ENCODE measurements at regions of chr1 and their contacts with region 1.

Region 1: GRCh38 chr1:179002552-179003345 is 22.9 kb upstream of the FAM20B start:
- DNase-seq: no peak
- H3K4me3 ChIP-seq: no peak overlapping the region
- H3K27me3 ChIP-seq: no peaks in the 10 kb centered on the region
- CTCF ChIP-seq: peak; percentile 92

Region 2: DNA sequence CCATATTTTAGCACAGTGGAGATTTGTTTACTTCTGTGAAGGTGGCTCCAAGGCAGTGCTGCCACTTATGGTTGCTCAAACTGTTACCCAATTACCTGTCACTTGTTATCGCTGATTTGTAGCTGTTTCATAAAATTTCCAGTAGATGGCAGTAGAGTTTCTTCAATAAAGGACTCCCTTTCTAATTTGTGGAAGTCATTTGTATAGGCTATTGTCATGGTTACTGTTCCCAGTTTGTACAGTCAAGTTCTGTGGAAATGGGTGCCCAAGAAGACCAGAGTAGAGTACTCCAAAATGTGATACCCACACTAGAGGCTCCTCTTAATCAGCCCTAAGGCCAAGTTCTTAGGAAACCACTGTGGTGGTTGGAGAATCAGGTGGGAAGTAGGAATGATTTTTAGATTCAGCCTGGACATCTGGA is 692.1 kb before region 1 on chr1:
- CTCF ChIA-PET with region 1: interaction called, 20 read pairs
- POLR2A ChIA-PET with region 1: no interaction called
- DNase-seq: peak; percentile 46
- H3K4me3 ChIP-seq: no peak overlapping the region
- H3K27me3 ChIP-seq: no peaks in the 10 kb centered on the region
- CTCF ChIP-seq: peak; percentile 66

Region 3: DNA sequence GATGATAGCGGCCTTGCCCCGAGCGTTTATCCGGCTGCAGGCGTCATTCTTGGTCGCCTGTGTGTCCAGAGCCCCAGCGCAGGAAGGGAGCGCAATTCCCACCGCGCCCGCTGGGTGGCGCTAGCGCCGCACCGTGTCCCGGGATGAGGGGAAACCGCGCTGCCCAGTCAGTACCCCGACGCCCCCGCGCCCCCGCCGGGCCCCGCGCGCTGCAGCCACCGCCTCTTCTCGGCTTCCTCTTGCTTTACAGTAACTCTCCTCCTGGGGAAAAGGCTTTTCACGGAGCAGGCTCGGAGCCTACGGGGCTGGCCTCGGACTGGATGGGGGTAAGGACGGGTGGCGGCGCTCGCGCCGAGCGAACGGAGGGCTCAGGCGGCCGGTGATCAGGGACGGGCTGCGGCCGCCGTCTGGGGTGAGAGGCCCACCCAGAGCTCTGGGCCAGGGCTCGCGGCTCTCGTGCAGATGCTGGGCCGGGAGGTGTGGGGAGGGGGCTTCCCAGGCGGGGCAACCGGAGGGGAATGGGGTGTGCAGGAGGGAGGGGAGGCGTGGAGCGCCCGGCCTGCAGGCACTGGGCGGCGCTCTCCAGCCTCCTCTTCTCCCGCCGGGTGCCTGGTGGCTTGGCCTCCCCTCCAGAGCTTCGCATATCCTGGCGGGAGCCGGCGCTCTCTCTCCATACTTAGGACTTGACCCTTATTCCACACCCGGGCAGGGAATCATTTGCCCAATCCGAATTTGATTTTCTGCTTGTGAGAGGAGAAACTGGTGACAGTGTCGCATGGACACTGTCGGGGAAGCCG is 460.0 kb before region 1 on chr1:
- CTCF ChIA-PET with region 1: interaction called, 375 read pairs
- POLR2A ChIA-PET with region 1: no interaction called
- DNase-seq: peak; percentile 28
- H3K4me3 ChIP-seq: peak overlapping the region; percentile 62
- H3K27me3 ChIP-seq: no peaks in the 10 kb centered on the region
- CTCF ChIP-seq: peak; percentile 81

Region 4: GRCh38 chr1:178768423-178768822 is 234.3 kb before region 1 on chr1:
- CTCF ChIA-PET with region 1: interaction called, 22 read pairs
- POLR2A ChIA-PET with region 1: no interaction called
- DNase-seq: no peak
- H3K4me3 ChIP-seq: no peak overlapping the region
- H3K27me3 ChIP-seq: no peaks in the 10 kb centered on the region
- CTCF ChIP-seq: peak; percentile 70

Region 5: GRCh38 chr1:178781533-178782330 is 221.0 kb before region 1 on chr1:
- CTCF ChIA-PET with region 1: interaction called, 11 read pairs
- POLR2A ChIA-PET with region 1: no interaction called
- DNase-seq: no peak
- H3K4me3 ChIP-seq: no peak overlapping the region
- H3K27me3 ChIP-seq: no peaks in the 10 kb centered on the region
- CTCF ChIP-seq: no peak

Region 6: GRCh38 chr1:179066471-179066870 is 63.7 kb after region 1 on chr1:
- CTCF ChIA-PET with region 1: interaction called, 10 read pairs
- POLR2A ChIA-PET with region 1: interaction called, 8 read pairs
- DNase-seq: no peak
- H3K4me3 ChIP-seq: no peak overlapping the region
- H3K27me3 ChIP-seq: no peaks in the 10 kb centered on the region
- CTCF ChIP-seq: no peak

Region 7: GRCh38 chr1:179393721-179394120 is 391.0 kb after region 1 on chr1:
- CTCF ChIA-PET with region 1: no interaction called
- POLR2A ChIA-PET with region 1: no interaction called
- DNase-seq: no peak
- H3K4me3 ChIP-seq: no peak overlapping the region
- H3K27me3 ChIP-seq: no peaks in the 10 kb centered on the region
- CTCF ChIP-seq: no peak

Measured in BJ (cell line).